Activated naive CD8-positive, alpha-beta T cell treated with anti-CD3 and anti-CD28 coated beads, Interleukin-2, amount 10 ng/mL, durations not matched to agents 7 days and 5 days (primary cell): ENCODE measurements at regions of chr19 and their contacts with region 1.

Region 1: DNA sequence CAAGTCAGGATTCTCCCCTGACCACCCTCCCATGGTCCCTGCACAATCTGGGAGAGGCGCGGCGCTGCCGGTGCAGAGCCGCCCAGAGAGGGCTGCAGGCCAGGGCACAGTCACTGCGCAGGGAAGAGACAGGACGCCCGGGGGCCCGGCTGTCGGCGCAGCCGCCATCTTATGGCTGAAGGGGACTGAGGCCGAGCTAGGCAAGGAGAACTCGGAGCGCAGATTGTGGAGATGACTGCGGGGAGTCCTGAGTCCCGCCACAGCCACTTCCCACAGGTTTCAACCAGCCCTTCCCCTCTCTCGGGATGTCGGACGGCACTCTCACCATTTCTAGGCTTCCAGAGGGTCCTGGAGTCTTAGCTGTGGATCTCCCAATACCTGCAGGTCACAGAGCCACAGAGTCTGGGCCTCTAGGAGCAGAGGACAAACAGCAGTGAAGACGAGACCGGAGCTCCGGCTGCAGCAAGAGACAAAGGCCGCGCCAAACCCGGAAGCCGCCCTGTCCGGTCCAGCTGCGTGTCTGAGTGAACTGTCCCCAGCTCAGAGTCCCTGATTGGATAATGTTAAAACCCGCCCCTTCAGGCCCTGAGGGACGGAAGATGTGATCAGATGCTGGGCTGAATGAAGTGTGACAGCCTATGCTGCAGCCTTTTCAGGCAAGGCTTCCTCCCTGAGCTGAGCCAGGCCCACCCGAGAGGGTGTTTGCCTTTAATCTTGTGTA is at the start of gene ZNF708:
- DNase-seq: peak; percentile 77
- ATAC-seq: peak; percentile 100
- H3K4me3 Mint-ChIP-seq: peak within 1 kb of the TSS; percentile 99
- H3K27ac Mint-ChIP-seq: peak within 1 kb of the TSS; percentile 99
- H3K4me1 Mint-ChIP-seq: peaks cover 17% of the 10 kb centered on the region
- H3K27me3 Mint-ChIP-seq: no peaks in the 10 kb centered on the region
- total RNA-seq, gene ZNF708: 28.5 to 30.7 TPM

Region 2: DNA sequence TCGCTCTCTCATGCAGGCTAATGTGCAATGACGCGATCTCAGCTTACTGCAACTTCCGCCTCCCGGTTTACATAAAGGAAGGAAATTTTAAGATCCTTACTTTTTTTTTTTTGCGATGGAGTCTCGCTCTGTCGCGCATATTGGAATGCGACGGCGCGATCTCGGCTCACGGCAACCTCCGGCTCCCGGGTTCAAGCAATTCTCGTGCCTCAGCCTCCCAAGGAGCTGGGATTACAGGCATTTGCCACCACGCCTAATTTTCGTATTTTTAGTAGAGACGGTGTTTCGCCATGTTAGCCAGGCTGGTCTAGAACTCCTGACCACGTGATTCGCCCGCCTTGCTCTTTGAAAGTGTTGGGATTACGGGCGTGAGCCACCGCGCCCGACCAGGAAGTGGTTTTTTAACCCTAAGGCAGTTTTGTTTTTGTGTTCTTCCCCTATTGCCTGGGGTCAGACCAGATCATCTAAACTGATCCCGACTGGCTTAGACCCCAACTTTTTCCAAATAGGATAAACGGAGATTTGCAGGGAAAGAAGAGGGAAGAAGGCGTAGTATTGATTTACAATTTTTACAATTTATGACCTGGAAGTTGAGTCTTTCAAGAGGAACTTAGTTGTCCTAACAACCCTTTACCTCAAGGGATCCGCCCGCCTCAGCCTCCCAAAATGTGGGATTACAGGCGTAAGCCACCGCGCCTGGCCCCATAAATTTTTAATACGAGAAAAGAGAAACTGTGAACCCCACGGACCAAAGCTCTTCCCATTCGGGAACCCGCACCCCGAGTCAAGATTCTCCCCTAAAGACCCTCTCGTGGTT is 905.5 kb before region 1 on chr19:
- POLR2A ChIA-PET with region 1: interaction called, 10 read pairs
- DNase-seq: peak; percentile 52
- ATAC-seq: no peak
- H3K4me3 Mint-ChIP-seq: peak overlapping the region; percentile 96
- H3K27ac Mint-ChIP-seq: peak overlapping the region; percentile 98
- H3K4me1 Mint-ChIP-seq: peaks cover 8% of the 10 kb centered on the region
- H3K27me3 Mint-ChIP-seq: no peaks in the 10 kb centered on the region

Region 3: DNA sequence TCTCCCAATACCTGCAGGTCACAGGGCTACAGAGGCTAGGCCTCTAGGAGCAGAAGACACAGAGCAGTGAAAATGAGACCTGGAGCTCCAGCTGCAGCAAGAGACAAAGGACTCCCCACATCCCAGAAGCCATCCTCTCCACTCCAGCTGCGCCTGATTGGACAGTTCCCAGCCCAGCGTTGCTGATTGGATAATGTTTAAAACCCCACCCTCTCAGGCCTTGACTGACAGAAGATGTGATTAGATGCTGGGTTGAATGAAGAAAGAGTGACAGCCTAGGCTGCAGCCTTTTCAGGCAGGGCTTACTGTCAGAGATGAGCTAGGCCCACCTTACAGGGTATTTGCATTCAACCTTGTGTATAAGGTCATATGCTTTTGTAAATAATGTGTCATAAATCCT is 59.2 kb before region 1 on chr19:
- POLR2A ChIA-PET with region 1: no interaction called
- DNase-seq: no peak
- ATAC-seq: no peak
- H3K4me3 Mint-ChIP-seq: no peak overlapping the region
- H3K27ac Mint-ChIP-seq: no peak overlapping the region
- H3K4me1 Mint-ChIP-seq: no peaks in the 10 kb centered on the region
- H3K27me3 Mint-ChIP-seq: no peaks in the 10 kb centered on the region

Region 4: GRCh38 chr19:21358768-21359451 is 29.9 kb after region 1 on chr19 and contains the start of gene ZNF738:
- POLR2A ChIA-PET with region 1: interaction called, 36 read pairs
- DNase-seq: peak; percentile 80
- ATAC-seq: peak; percentile 97
- H3K4me3 Mint-ChIP-seq: peak within 1 kb of the TSS; percentile 99
- H3K27ac Mint-ChIP-seq: peak within 1 kb of the TSS; percentile 98
- H3K4me1 Mint-ChIP-seq: peaks cover 7% of the 10 kb centered on the region
- H3K27me3 Mint-ChIP-seq: no peaks in the 10 kb centered on the region
- total RNA-seq, gene ZNF738: 13.9 to 16.4 TPM

Region 5: GRCh38 chr19:21383980-21384582 is 55.0 kb after region 1 on chr19:
- POLR2A ChIA-PET with region 1: no interaction called
- DNase-seq: no peak
- ATAC-seq: no peak
- H3K4me3 Mint-ChIP-seq: no peak overlapping the region
- H3K27ac Mint-ChIP-seq: no peak overlapping the region
- H3K4me1 Mint-ChIP-seq: no peaks in the 10 kb centered on the region
- H3K27me3 Mint-ChIP-seq: no peaks in the 10 kb centered on the region

Region 6: DNA sequence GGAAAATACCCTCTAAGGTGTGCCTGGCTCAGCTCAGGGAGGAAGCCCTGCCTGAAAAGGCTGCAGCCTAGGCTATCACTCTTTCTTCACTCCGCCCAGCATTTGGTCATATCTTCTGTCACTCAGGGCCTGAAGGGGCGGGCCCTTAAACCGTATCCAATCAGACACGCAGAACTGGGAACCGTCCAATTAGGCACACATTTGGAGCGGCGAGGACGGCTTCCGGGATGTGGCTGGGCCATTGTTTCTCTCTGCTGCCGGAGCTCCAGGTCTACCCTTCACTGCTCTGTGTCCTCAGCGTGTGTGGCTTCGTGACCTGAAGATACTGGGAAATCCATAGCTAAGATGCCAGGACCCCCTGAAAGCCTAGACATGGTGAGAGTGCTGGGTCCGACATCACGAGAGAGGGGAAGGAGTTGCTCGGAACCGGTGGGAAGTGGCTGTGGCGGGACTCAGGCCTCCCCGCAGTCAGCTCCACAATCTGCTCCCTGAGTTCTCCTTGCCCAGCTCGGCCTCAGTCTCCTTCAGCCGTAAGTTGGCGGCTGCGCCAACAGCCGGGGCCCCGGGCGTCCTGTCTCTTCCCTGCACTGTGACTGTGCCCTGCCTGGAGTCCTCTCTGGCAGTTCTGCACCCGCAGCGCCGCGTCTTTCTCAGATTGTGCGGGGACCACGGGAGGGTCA is 68.0 kb after region 1 on chr19 and contains the start of gene ZNF493:
- POLR2A ChIA-PET with region 1: interaction called, 30 read pairs
- DNase-seq: peak; percentile 84
- ATAC-seq: peak; percentile 99
- H3K4me3 Mint-ChIP-seq: peak within 1 kb of the TSS; percentile 99
- H3K27ac Mint-ChIP-seq: peak within 1 kb of the TSS; percentile 97
- H3K4me1 Mint-ChIP-seq: peaks cover 3% of the 10 kb centered on the region
- H3K27me3 Mint-ChIP-seq: no peaks in the 10 kb centered on the region
- total RNA-seq, gene ZNF493: 34.5 to 39.4 TPM